IMR-90 (cell line): ENCODE measurements at regions of chr3 and their contacts with region 1.

Region 1: DNA sequence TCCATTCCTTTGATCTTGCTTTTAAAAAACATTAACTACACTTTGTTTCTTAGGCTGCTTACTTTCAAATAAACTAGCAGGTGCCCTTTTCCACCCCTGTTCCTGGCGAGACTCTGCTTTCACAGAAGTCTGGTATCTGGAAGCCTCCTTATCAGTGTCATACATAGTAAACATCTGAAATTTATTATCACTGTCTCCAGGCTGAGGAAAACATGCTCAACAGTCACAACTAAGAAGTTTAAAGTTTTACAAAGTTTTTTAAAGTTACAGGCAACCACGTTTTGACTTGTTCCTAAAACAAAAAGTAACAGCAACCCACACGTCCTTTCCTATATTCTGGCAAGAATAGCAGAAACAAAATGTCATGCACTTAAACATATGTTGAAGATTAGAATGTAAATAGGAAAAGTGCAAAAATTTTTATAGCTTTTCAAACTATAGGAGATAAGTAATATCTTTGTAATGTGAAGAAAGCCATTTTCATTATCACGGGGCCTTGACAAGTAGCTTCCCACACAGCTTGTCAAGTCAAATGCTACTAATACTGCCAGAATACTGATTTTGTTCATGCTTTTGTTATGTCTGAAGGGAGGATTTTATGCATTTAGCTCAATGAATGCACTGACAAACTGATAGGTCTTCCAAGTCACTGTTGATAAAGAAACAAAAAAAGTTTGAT is 275.2 kb upstream of the KCNMB2 start:
- DNase-seq: no peak
- ATAC-seq: no peak
- H3K4me3 ChIP-seq: no peak overlapping the region
- H3K27ac ChIP-seq: no peak overlapping the region
- H3K4me1 ChIP-seq: 0 out of 2 replicates have a peak, but pooled peaks cover 1% of the 10 kb centered on the region
- H3K27me3 ChIP-seq: no peaks in the 10 kb centered on the region
- CTCF ChIP-seq: no peak
- POLR2A ChIP-seq: no peak
- RAD21 ChIP-seq: no peak

Region 2: GRCh38 chr3:178244733-178245724 is 16.0 kb before region 1 on chr3:
- CTCF ChIA-PET with region 1: interaction called, 3 read pairs
- POLR2A ChIA-PET with region 1: no interaction called
- dilution Hi-C with region 1: no loop called
- in situ Hi-C with region 1: no loop called
- intact Hi-C with region 1: loop called (anchors 2 kb)
- DNase-seq: peak; percentile 66
- ATAC-seq: peak; percentile 61; the same call in 1 of the 2 replicates
- H3K4me3 ChIP-seq: no peak overlapping the region
- H3K27ac ChIP-seq: no peak overlapping the region
- H3K4me1 ChIP-seq: peaks cover 2% of the 10 kb centered on the region; the same call in 1 of the 2 replicates
- H3K27me3 ChIP-seq: no peaks in the 10 kb centered on the region
- CTCF ChIP-seq: no peak
- POLR2A ChIP-seq: no peak
- RAD21 ChIP-seq: no peak